Left cardiac atrium (tissue), 4 donors: ENCODE measurements at regions of chr6 and their contacts with region 1.

Region 1: GRCh38 chr6:13487122-13488014 is at the start of gene GFOD1:
- DNase-seq: peak; percentile 91
- ATAC-seq: peak; percentile 89 to 90
- total RNA-seq, gene GFOD1: 59.3 to 78.3 TPM

Region 2: GRCh38 chr6:13014504-13015378 is 472.6 kb before region 1 on chr6:
- intact Hi-C with region 1: no loop called
- DNase-seq: peak; percentile 25
- ATAC-seq: peak; percentile 46 to 56

Region 3: DNA sequence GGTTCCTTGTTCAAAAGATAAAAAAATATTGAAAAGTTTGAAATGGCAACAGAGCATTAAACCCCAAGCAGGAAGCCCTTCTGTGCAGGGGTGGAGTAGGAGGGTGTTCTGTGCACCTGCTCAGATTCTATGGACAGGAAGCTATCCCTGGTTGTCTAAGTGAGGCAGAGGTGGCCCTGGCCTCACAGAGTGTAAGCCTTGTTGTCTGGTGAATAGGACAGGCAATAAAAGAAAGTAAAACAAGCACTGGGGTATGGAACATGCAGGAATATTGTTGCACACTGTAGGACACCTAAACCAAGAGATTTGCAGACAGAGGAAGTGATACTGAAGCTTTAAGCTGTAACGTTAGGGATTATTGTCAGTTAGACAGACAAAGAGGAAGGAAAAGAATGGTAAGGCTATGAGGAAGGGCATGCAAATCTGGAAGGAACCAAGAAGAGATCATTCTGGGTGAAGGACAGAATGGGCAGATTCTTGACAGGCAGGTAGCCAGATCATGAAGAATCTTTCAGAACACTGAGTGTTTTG is 225.8 kb before region 1 on chr6:
- intact Hi-C with region 1: no loop called
- DNase-seq: no peak
- ATAC-seq: peak in 1 of 2 donors; percentile 66

Region 4: DNA sequence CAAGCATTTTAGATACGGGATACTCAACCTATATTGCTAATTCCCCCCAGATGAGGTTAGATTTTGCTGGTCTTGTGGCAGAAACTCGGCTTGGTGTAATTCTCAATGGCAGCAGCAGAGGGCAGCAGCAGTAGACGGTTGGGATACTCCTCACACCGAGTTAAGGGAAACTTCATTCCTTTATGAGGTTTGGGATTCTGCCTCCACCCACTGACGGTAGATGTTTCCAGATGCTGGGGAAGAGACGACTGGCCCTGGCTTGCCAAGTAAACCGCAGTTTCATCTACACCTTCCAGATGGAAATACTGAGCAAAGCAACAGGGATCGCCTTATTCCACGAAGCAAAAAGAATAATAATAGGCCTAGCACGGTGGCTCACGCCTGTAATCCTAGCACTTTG is 150.8 kb before region 1 on chr6:
- intact Hi-C with region 1: loop called in 1 of 2 experiments (anchors 2 kb)
- DNase-seq: peak; percentile 77
- ATAC-seq: peak; percentile 74 to 77

Region 5: DNA sequence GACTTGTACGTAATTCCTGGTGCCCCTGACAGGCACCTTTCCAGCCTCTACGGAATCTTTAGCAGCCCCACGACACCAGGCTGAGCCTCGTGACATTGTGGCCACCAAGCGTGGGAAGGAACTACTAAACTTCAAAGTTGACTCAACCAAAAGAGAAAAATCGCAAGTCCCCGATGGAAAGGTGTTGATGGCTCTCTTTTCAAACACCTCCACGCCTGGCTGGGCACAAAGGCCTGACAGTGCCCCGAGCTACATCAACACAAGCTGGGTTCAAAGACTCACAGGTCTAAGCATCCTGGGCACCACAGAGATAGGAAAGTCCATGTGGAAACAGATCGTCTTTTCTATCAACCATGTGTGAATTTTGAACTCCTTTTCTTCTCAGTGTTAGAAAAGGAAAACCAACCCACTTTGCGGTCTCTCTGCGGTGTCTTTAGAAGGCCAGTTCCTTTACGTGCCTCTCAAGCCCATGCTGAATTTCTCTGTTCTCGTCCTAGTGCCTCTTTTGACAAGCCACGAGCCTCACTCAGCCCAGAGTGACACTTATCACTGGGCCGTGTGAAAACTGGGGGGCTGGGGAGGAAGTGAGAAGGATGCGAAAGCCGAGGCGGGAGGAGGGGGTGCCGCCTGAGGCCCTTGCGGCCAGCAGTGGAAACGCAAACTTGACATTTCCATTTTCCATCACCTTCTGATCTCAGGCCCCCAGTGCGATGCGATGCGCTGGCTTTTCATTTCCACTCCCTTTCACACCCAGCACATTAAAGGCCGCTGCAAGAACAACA is 59.4 kb before region 1 on chr6:
- intact Hi-C with region 1: loop called in 1 of 2 experiments (anchors 5 kb)
- DNase-seq: peak; percentile 61
- ATAC-seq: peak; percentile 28 to 45

Region 6: GRCh38 chr6:13538084-13538483 is 50.7 kb after region 1 on chr6:
- intact Hi-C with region 1: loop called (anchors 2 to 10 kb)
- DNase-seq: no peak
- ATAC-seq: peak; percentile 59 to 62

Region 7: GRCh38 chr6:13574149-13574570 is 86.8 kb after region 1 on chr6:
- intact Hi-C with region 1: loop called in 1 of 2 experiments (anchors 10 kb)
- DNase-seq: peak; percentile 94
- ATAC-seq: peak; percentile 97

Region 8: DNA sequence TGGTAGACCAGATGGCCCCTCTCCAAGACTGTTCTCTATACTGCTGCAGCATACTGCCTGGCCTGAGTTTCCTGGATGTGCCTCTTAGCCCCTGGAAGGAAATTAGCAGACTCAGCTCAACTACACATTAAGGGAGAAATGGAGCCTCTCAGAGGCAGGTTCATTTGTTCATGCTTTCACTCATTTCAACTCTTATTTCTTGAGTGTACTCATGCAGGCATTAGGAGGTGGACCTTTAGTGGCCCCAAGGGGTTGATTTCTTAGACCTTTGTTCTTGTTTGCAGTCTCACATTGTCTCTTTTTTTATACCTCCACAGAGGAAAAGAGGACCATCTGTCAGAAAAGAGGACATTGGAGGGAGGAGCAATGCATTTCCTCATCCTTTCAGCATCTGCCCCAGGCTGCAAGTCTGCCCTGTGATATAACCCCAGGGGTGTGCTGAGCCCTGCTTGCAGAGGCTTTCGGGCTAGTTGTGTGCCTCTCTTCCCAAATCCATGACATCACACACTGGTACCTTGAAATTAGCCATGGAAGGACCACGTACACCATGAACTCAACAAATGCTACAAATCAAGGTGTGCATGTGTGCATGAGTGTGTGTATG is 1086.4 kb after region 1 on chr6:
- intact Hi-C with region 1: no loop called
- DNase-seq: no peak
- ATAC-seq: no peak

Region 9: DNA sequence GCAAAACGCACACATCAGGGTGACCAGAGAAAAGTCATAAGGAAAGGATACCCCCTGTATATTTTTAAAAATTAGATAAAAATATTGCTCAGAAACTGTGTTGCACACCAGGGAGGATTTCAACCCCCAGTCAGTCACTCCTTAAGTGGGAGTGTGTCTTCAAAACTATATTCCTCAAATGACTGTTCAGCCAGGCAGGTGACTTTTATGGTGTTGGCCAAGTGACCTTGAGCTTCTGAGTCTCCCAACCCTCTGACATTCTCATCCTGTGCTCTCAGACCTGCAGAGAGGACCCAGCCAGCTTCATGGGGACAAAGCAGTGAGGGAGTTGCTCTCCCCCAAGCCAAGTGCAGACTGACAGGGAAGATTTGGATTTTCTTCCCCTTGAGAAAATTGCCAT is 1446.6 kb after region 1 on chr6:
- intact Hi-C with region 1: no loop called
- DNase-seq: no peak
- ATAC-seq: no peak